ENCODE measurements at regions of chrX and their contacts with region 1.

Region 1: DNA sequence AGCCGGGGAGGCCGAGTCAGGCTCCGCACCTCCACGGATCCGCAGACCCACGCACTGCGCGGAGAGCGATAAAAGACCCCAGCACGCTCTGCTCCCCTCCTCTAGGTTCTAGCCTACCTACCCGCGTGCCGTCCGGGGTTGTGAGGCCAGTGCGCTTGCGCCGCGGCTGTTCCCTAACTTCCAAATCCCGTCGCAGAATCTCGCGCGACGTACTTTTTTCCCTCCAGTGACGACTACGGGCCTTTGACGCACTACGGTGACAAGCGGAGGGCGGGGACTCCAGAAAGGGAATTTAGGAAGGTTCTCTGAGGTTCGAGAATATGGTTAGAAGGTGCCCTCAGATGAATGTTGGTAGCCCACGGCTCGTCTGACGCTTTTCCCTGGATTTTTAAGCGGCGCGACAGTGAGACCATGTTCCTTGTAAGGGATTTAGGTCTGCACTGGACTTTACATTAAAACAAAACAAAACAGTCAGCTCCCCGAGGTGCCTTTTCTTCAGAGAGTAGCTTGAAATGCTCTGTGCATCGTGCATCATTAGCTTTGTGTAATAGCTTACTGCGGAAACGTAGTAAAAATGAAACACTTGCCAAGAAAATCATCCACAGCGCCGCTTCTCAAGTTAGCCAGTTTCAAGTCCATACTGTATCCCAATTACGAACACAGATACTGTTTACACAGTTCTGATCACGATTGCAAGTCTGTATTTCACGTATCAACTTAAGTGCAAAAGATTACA is at the start of gene NKRF:
- DNase-seq: peak; percentile 76 to 90 (median 86)
- H3K4me3 ChIP-seq: peak within 1 kb of the TSS; percentile 45 to 83 (median 71)
- H3K27ac ChIP-seq: peak within 1 kb of the TSS; percentile 50 to 98 (median 92)
- H3K27me3 ChIP-seq: peaks cover 0 to 38% (median 0%) of the 10 kb centered on the region in 45 donors
- CTCF ChIP-seq: peak in 6 of 56 donors; percentile 6 to 26 (median 14)
- total RNA-seq, gene NKRF: 11.2 to 39.9 (median 29.2) TPM

Region 2: DNA sequence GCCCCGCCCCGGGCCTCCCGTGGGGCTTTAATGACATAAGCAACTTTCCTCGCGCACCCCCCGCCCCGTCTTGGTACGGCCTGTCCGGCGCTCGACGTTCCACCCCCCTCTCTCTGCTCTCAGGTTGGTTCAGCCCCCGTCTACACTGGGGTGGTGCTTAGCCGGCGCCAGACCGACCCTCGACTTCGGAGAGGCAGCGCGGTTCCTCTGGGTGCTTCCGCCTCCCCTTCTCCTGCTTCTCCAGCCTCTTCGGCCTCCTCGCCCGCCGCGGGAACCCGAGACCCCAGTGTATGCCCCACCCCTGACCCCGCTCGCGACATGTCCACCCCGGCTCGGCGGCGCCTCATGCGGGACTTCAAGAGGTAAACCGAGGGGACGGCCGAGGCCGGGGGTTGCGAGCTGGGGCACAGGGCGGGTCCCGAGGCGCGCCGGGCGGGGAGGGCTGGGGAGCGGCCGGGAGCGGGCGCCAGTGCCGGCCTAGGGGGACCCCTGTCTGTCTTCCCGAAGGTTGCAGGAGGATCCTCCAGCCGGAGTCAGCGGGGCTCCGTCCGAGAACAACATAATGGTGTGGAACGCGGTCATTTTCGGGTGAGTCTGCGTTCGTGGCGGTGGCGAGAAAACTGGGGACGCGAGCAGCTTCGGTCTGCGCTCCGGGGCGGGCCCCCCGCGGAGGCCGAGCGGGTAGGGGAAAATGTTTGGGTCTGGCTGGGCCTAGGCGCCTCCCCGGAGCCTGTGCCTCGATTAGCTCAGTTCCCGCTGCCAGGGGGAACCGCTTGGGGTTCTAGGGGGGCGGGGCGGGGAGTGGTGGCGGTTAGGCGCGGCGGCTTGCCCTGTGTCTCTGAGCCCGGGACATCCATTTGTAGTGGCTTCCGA is 31.8 kb before region 1 on chrX and contains the start of gene UBE2A:
- intact Hi-C with region 1: loop called in 1 of 2 experiments (anchors 2 kb)
- DNase-seq: peak; percentile 66 to 87 (median 80)
- H3K4me3 ChIP-seq: peak within 1 kb of the TSS; percentile 44 to 81 (median 69)
- H3K27ac ChIP-seq: peak within 1 kb of the TSS in 57 of 59 donors; percentile 21 to 92 (median 85)
- H3K27me3 ChIP-seq: peaks cover 0 to 36% (median 0%) of the 10 kb centered on the region in 45 donors
- CTCF ChIP-seq: peak in 45 of 56 donors; percentile 7 to 62 (median 36)
- total RNA-seq, gene UBE2A: 27.7 to 49.8 (median 39.2) TPM

Measured in dorsolateral prefrontal cortex (tissue), 120 donors.